ENCODE measurements at regions of chr12 and their contacts with region 1.

Region 1: DNA sequence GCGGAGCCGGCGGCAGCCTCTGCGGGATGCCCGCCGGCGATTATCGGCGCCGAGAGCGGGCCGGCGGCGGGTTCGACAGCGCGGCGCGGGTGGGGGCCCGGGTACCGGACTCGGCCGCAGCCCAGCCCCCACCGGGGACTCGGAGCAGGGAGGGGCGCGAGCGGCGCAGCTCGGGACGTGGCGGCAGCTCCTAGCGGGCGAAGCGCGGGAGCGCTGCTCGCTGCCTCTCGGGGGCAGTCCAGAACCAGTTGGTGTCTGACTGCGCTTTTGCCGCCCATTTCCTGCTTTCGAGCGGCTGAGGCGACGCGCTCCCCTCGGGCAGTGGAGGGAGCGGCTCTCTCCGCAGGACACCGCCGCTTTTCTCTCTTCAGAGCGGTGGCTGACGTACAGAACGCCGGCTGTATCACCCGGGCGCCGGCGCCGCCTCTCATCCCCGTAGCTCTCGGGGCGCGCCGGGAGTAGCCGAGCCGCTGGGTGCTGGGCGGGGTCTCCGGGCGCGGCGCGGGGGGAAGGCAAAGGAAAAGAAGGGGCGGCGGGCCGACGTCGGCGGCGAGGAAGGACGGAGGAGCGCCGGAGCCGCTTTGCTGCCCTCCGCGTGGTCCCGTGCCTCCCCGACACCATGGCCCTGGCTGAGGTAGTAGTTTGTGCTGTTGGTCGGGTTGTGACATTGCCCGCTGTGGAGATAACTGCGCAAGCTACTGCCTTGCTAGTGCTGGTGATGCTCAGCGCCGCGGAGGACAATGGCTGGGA is 136.6 kb downstream of the MON2 start:
- DNase-seq: peak; percentile 89 to 95 (median 95)
- ATAC-seq: peak; percentile 94 to 96
- H3K4me3 ChIP-seq: peak overlapping the region; percentile 71
- H3K27ac ChIP-seq: peak overlapping the region; percentile 97
- H3K4me1 ChIP-seq: no peaks in the 10 kb centered on the region
- H3K27me3 ChIP-seq: no peaks in the 10 kb centered on the region

Region 2: DNA sequence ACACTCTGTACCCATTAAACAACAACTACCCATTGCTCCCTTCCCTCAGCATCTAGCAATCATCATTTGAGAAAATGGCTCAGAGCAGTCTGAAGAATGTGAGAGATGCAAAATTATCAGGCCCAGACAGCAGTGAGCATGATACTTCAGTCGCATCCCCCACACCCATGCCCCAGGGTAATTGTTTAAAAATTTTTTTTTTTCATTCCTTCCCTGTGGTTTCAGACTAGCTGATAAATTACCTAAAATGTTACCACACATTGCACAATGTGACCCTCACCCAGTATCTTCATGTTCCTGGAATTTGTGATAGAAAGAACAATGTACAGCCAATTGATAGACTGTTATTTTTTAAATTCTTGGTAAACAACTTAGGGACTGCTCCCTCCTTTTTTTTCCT is 354.4 kb before region 1 on chr12:
- intact Hi-C with region 1: no loop called
- DNase-seq: no peak
- ATAC-seq: no peak
- H3K4me3 ChIP-seq: no peak overlapping the region
- H3K27ac ChIP-seq: no peak overlapping the region
- H3K4me1 ChIP-seq: peaks cover 4% of the 10 kb centered on the region
- H3K27me3 ChIP-seq: no peaks in the 10 kb centered on the region

Region 3: GRCh38 chr12:62703011-62703380 is 99.8 kb after region 1 on chr12:
- intact Hi-C with region 1: loop called in 1 of 4 experiments (anchors 10 kb)
- DNase-seq: no peak
- ATAC-seq: peak in 1 of 2 donors; percentile 2
- H3K4me3 ChIP-seq: no peak overlapping the region
- H3K27ac ChIP-seq: peak overlapping the region; percentile 89
- H3K4me1 ChIP-seq: peaks cover 12% of the 10 kb centered on the region
- H3K27me3 ChIP-seq: no peaks in the 10 kb centered on the region

Region 4: GRCh38 chr12:62793256-62794217 is 190.3 kb after region 1 on chr12:
- intact Hi-C with region 1: loop called in 2 of 4 experiments (anchors 5 kb)
- DNase-seq: peak; percentile 83 to 94 (median 92)
- ATAC-seq: peak; percentile 65 to 72
- H3K4me3 ChIP-seq: no peak overlapping the region
- H3K27ac ChIP-seq: no peak overlapping the region
- H3K4me1 ChIP-seq: no peaks in the 10 kb centered on the region
- H3K27me3 ChIP-seq: no peaks in the 10 kb centered on the region

Region 5: DNA sequence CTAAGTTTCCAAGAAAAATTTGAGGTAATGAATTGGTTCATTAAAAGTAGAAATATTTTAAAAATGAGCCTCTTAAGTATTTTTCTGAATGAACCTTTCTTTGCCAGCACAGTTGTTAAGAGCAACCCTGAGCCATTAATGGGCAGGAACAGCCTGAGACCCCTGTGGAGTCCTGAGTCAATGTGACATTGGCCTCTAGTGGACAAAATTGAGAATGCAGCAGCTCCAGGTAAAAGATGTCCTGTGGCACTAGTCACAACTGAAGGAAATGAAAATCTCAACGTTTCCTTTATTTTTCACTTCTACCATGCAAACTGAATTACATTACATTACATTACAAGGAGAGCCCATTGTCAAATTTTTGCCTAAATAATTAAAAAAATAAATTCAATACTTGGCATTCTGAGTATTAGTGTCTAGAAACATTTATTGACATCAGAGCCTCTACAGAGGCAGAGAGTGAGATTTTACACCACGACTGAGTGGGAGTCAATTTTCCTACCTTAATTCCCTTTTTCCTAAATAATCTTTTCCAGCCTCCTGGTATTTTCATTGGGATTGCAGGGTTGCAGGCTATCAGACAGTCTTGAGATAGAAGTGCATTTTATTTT is 196.0 kb after region 1 on chr12:
- intact Hi-C with region 1: loop called in 2 of 4 experiments (anchors 5 kb)
- DNase-seq: peak in 1 of 3 donors; percentile 28
- ATAC-seq: peak; percentile 78 to 85
- H3K4me3 ChIP-seq: no peak overlapping the region
- H3K27ac ChIP-seq: no peak overlapping the region
- H3K4me1 ChIP-seq: no peaks in the 10 kb centered on the region
- H3K27me3 ChIP-seq: no peaks in the 10 kb centered on the region

Measured in right cardiac atrium (tissue), 5 donors.